ENCODE measurements at regions of chr16 and their contacts with region 1.

Region 1: GRCh38 chr16:71610936-71611871 is 14.8 kb upstream of the MARVELD3 start:
- DNase-seq: peak; percentile 88
- ATAC-seq: peak; percentile 91
- H3K4me3 ChIP-seq: peak overlapping the region in 2 of 5 experiments; percentile 11 to 15
- H3K4me3 Mint-ChIP-seq: peak overlapping the region; percentile 70
- H3K27ac ChIP-seq: no peak overlapping the region
- H3K27ac Mint-ChIP-seq: no peak overlapping the region
- H3K4me1 ChIP-seq: peaks cover 3 to 13% of the 10 kb centered on the region in 2 donors
- H3K4me1 Mint-ChIP-seq: peaks cover 21% of the 10 kb centered on the region
- H3K27me3 ChIP-seq: peaks cover 0 to 2% (median 0%) of the 10 kb centered on the region in 4 experiments
- H3K27me3 Mint-ChIP-seq: no peaks in the 10 kb centered on the region
- CTCF ChIP-seq: peak; percentile 99

Region 2: DNA sequence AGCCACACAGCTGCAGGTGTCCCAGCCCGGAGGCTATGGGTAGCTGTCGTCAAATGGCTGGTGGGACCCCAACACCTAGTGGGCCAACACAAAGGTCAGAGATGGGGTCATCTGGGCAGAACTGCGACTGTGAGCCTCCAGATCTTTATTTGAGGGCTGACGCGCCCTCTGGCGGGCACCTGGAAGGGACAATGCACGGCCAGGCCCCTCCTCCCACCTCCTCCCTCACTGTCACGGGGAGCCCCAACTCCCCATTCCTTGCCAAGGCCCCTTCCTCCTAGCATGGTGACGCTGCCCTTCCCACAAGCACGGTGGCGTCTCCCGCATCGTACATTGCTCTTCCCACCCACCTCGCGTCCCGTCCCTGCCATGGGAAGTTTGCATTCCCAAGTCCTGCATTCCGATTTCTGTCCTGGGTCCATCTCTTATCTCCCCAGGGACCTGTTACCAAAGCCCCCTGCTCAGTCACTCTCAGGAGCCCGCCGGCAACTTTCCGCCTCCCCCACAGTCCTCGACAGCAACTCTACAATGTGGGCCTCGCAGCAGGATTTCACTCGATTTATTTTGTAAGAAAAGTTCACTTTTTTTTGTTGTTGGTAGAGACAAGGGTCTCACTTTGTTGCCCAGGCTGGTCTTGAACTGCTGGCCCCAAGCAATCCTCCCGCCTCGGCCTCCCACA is 170.4 kb before region 1 on chr16:
- CTCF ChIA-PET with region 1: interaction called, 11 read pairs
- POLR2A ChIA-PET with region 1: no interaction called
- intact Hi-C with region 1: no loop called
- DNase-seq: no peak
- ATAC-seq: no peak
- H3K4me3 ChIP-seq: no peak overlapping the region
- H3K4me3 Mint-ChIP-seq: no peak overlapping the region
- H3K27ac ChIP-seq: no peak overlapping the region
- H3K27ac Mint-ChIP-seq: no peak overlapping the region
- H3K4me1 ChIP-seq: no peaks in the 10 kb centered on the region
- H3K4me1 Mint-ChIP-seq: no peaks in the 10 kb centered on the region
- H3K27me3 ChIP-seq: peaks cover 0 to 12% (median 2%) of the 10 kb centered on the region in 4 experiments
- H3K27me3 Mint-ChIP-seq: peaks cover 18% of the 10 kb centered on the region
- CTCF ChIP-seq: no peak

Region 3: DNA sequence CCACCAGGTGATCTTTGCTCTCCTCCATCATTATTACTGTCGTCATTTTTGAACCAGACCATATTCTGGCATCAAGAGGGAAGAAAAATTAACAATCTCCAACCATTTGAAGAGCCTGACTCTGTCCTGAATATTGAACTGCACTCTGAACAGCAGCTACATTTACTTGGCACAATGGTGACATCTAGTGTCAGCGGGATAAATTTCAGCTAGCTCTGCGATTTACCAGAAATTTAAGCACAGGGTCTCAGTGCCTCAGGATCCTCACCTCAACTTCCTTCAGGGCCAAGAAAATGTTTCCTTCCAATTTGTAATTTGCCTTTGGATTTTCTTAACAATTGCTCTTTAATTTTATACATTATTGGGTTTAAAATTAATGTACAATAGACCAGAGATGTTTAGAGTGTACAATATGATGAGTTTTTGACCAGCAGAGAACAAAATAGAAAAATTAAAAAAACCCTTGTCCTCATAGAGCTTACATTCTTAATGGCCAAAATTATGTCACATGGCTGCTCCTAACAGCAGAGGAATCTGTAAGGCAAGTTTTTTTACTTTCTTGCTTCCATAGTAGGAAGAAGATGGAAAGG is 111.3 kb before region 1 on chr16:
- CTCF ChIA-PET with region 1: interaction called, 105 read pairs
- POLR2A ChIA-PET with region 1: no interaction called
- intact Hi-C with region 1: loop called (anchors 1 kb)
- DNase-seq: peak; percentile 80
- ATAC-seq: peak; percentile 69
- H3K4me3 ChIP-seq: no peak overlapping the region
- H3K4me3 Mint-ChIP-seq: no peak overlapping the region
- H3K27ac ChIP-seq: no peak overlapping the region
- H3K27ac Mint-ChIP-seq: no peak overlapping the region
- H3K4me1 ChIP-seq: no peaks in the 10 kb centered on the region
- H3K4me1 Mint-ChIP-seq: no peaks in the 10 kb centered on the region
- H3K27me3 ChIP-seq: peaks cover 0 to 5% (median 1%) of the 10 kb centered on the region in 4 experiments
- H3K27me3 Mint-ChIP-seq: peaks cover 16% of the 10 kb centered on the region
- CTCF ChIP-seq: peak; percentile 91

Region 4: DNA sequence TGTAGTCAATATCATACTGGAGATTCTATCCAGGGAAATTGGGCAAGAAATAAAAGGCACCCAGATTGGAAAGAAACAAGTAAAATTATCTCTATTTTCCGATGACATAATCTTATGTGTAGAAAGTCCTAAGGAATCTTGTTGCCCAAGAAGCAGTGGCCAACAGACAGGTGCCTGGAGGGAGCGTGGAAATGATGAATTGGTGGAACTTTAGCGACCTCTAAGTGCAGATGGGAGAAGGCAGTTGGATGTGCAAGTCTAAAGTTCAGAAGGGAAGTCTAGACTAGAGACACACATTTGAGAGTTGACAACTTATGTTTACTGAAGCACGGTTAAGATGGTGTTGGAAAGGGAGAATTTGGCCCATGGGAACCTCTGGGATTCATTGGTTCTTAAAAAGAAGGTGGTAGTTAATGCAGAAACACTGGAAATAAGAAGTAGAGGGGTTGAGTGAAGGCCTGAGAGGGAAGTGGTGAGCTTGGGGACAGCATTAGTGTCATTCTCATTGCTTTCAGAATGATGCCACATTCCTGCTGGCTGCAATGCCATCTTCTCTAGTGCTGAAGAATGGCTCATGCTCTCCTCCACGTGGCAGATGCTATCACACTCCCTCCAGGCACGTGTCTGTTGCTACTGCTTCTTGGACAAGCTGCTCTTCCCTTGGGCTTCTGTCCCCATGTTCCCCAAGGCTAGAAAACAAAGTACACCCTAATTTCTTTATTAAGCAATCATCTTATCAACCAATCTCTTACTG is 58.3 kb before region 1 on chr16:
- CTCF ChIA-PET with region 1: interaction called, 22 read pairs
- POLR2A ChIA-PET with region 1: no interaction called
- intact Hi-C with region 1: no loop called
- DNase-seq: no peak
- ATAC-seq: no peak
- H3K4me3 ChIP-seq: no peak overlapping the region
- H3K4me3 Mint-ChIP-seq: no peak overlapping the region
- H3K27ac ChIP-seq: no peak overlapping the region
- H3K27ac Mint-ChIP-seq: no peak overlapping the region
- H3K4me1 ChIP-seq: no peaks in the 10 kb centered on the region
- H3K4me1 Mint-ChIP-seq: peaks cover 8% of the 10 kb centered on the region
- H3K27me3 ChIP-seq: peaks cover 0 to 5% (median 2%) of the 10 kb centered on the region in 4 experiments
- H3K27me3 Mint-ChIP-seq: peaks cover 13% of the 10 kb centered on the region
- CTCF ChIP-seq: no peak

Region 5: DNA sequence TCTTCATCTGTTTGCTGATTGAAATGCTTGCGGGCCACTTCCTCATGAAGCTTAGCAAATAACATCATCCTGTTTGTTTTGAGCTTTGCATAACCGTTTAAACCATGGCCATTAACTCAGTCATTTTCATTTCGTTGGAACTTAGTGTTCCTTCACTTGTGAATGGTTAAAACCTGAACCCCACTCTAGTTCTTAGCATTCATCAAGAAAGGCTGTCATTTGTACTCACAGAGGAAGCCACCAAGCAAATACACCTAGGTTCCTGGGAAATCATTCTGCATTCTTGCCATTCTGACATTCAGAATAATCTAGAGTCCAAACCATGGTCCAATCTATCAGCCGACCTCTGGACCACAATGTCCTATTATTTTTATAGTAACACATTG is 25.9 kb before region 1 on chr16:
- CTCF ChIA-PET with region 1: interaction called, 11 read pairs
- POLR2A ChIA-PET with region 1: no interaction called
- intact Hi-C with region 1: no loop called
- DNase-seq: no peak
- ATAC-seq: no peak
- H3K4me3 ChIP-seq: no peak overlapping the region
- H3K4me3 Mint-ChIP-seq: no peak overlapping the region
- H3K27ac ChIP-seq: no peak overlapping the region
- H3K27ac Mint-ChIP-seq: no peak overlapping the region
- H3K4me1 ChIP-seq: peaks cover 0 to 8% of the 10 kb centered on the region in 2 donors
- H3K4me1 Mint-ChIP-seq: peaks cover 16% of the 10 kb centered on the region
- H3K27me3 ChIP-seq: peaks cover 0 to 9% (median 4%) of the 10 kb centered on the region in 4 experiments
- H3K27me3 Mint-ChIP-seq: peaks cover 17% of the 10 kb centered on the region
- CTCF ChIP-seq: no peak

Measured in B cell (primary cell).